Dendritic cell treated with granulocyte-macrophage colony-stimulating factor and Interleukin-4, amounts not matched to agents 40 ng/mL and 50 ng/mL, for 4 days (primary cell): ENCODE measurements at regions of chr3 and their contacts with region 1.

Region 1: GRCh38 chr3:128698211-128699064 is 27.5 kb upstream of the RAB7A start:
- H3K4me3 Mint-ChIP-seq: peak overlapping the region; percentile 81
- H3K27ac Mint-ChIP-seq: peak overlapping the region; percentile 92
- H3K4me1 Mint-ChIP-seq: peaks cover 53% of the 10 kb centered on the region
- H3K27me3 Mint-ChIP-seq: no peaks in the 10 kb centered on the region

Region 2: DNA sequence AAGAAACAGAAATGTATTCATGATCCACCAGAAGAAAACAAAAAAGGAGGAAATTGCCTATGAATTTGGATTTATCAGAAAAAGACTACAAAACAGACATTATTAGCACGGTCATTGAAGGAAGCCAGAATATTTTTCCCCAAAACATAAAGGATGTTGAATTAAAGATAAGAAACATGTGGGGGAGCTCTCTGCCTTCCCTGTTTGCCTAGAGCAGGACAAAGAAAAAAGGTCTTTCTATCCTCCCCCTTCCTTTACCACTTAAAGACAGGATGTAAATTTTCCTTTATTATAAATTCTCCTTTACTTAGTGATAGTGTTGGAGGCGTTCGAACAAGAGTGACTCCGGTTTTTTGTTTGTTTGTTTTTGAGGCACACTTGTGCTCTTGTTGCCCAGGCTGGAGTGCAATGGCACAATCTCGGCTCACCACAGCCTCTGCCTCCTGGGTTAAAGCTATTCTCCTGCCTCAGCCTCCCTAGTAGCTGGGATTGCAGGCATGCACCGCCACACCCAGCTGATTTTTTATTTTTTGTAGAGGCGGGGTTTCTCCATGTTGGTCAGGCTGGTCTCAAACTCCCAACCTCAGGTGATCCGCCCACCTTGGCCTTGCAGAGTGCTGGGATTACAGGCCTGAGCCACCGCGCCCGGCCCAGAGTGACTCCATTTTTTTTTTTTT is 32.9 kb before region 1 on chr3:
- intact Hi-C with region 1: loop called (anchors 1 kb)
- H3K4me3 Mint-ChIP-seq: no peak overlapping the region
- H3K27ac Mint-ChIP-seq: no peak overlapping the region
- H3K4me1 Mint-ChIP-seq: peaks cover 30% of the 10 kb centered on the region
- H3K27me3 Mint-ChIP-seq: no peaks in the 10 kb centered on the region

Region 3: GRCh38 chr3:128895843-128896697 is 197.6 kb after region 1 on chr3:
- intact Hi-C with region 1: no loop called
- H3K4me3 Mint-ChIP-seq: no peak overlapping the region
- H3K27ac Mint-ChIP-seq: no peak overlapping the region
- H3K4me1 Mint-ChIP-seq: no peaks in the 10 kb centered on the region
- H3K27me3 Mint-ChIP-seq: no peaks in the 10 kb centered on the region